ENCODE measurements at regions of chr14 and their contacts with region 1.

Region 1: GRCh38 chr14:31884776-31885379 is 192.2 kb upstream of the ARHGAP5 start:
- DNase-seq: peak; percentile 45
- H3K4me3 Mint-ChIP-seq: no peak overlapping the region
- H3K27ac Mint-ChIP-seq: no peak overlapping the region
- H3K4me1 Mint-ChIP-seq: peaks cover 20% of the 10 kb centered on the region
- H3K27me3 Mint-ChIP-seq: no peaks in the 10 kb centered on the region
- CTCF ChIP-seq: no peak

Region 2: GRCh38 chr14:31902002-31902401 is 17.1 kb after region 1 on chr14:
- CTCF ChIA-PET with region 1: no interaction called
- POLR2A ChIA-PET with region 1: no interaction called
- intact Hi-C with region 1: loop called (anchors 1 kb)
- DNase-seq: peak; percentile 68
- H3K4me3 Mint-ChIP-seq: no peak overlapping the region
- H3K27ac Mint-ChIP-seq: no peak overlapping the region
- H3K4me1 Mint-ChIP-seq: no peaks in the 10 kb centered on the region
- H3K27me3 Mint-ChIP-seq: no peaks in the 10 kb centered on the region
- CTCF ChIP-seq: no peak